ENCODE measurements at regions of chr2 and their contacts with region 1.

Region 1: DNA sequence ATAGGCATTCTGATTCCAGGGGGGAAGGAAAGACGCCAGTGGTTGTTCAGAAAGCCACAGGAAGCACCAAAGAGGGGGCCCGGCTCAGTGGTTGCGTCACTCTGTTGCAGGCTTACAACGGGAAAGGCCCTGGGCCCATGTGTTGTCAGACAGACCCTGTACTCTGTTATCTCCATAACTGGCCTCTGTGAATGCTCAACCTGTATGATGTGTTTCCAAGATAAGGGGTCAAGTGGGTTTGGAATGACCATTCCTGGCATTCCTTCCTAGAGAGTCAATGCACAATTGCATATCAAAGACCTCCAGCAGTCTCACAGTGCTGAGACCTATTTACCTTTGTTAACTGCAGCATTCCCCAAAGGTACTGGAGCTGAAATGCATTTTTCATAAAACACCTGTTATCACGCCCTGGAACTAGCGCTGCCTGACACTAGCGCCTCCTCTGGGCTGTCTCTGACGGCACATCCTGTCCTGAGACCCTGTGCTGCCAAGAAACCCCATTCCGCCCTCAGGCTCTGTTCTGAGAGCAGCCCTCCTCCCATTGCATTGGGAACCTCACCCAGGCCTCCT is 13.2 kb upstream of the LRRFIP1 start:
- DNase-seq: peak; percentile 87 to 91
- H3K4me3 ChIP-seq: no peak overlapping the region
- H3K4me3 Mint-ChIP-seq: peak overlapping the region; percentile 54
- H3K27ac Mint-ChIP-seq: peak overlapping the region; percentile 88
- H3K4me1 ChIP-seq: peaks cover 34% of the 10 kb centered on the region
- H3K4me1 Mint-ChIP-seq: peaks cover 42% of the 10 kb centered on the region
- H3K27me3 ChIP-seq: no peaks in the 10 kb centered on the region
- H3K27me3 Mint-ChIP-seq: no peaks in the 10 kb centered on the region
- CTCF ChIP-seq: peak; percentile 30 to 59

Region 2: GRCh38 chr2:237393523-237393922 is 220.7 kb before region 1 on chr2:
- CTCF ChIA-PET with region 1: no interaction called
- POLR2A ChIA-PET with region 1: no interaction called
- intact Hi-C with region 1: no loop called
- DNase-seq: no peak
- H3K4me3 ChIP-seq: no peak overlapping the region
- H3K4me3 Mint-ChIP-seq: no peak overlapping the region
- H3K27ac Mint-ChIP-seq: no peak overlapping the region
- H3K4me1 ChIP-seq: no peaks in the 10 kb centered on the region
- H3K4me1 Mint-ChIP-seq: no peaks in the 10 kb centered on the region
- H3K27me3 ChIP-seq: no peaks in the 10 kb centered on the region
- H3K27me3 Mint-ChIP-seq: peaks cover 22% of the 10 kb centered on the region
- CTCF ChIP-seq: no peak

Region 3: DNA sequence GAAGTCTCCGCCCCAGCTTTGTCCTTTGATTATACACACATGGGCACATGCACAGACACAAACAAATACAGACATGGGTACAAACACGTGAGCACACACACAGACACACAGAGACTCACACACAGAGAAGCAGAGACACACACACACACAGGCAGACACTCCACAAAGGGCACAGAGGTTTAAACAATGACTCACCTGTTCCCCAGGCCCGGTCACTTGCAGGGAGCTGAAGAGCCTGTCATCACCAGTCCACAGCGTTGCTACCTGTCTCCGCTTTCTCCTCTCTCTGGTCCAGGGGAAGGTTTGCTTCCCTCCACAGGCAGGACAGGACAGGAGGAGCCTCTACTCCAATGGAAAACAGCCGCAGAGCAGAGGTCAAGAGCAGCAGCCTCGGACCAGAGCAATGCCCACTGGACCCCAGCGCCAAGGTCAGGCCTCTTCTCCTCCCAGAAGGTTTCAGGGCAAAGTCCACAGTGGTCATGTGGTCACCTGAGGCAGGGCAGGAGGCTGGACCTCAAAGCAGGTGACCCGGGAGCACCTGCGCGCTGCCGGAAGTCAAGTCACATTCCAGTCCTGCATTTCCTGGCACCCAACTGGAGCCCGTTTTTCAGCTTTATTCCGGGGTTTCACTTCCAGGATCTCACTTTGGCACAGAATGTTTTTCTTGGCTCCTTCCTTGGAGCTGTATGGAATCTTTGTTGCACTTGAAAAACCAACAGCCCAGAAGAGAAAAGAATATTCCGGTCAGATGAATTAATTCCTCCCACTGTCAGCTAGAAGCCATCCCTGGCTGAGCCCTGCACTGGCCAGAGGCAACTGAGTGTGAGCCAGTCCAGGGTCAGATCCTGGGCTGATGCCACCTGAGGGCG is 23.7 kb before region 1 on chr2 and contains the start of gene RAB17:
- CTCF ChIA-PET with region 1: interaction called, 3 read pairs
- POLR2A ChIA-PET with region 1: no interaction called
- intact Hi-C with region 1: loop called (anchors 1 kb)
- DNase-seq: peak; percentile 87 to 91
- H3K4me3 ChIP-seq: peak within 1 kb of the TSS; percentile 36
- H3K4me3 Mint-ChIP-seq: peak within 1 kb of the TSS; percentile 88
- H3K27ac Mint-ChIP-seq: peak within 1 kb of the TSS; percentile 95
- H3K4me1 ChIP-seq: peaks cover 33% of the 10 kb centered on the region
- H3K4me1 Mint-ChIP-seq: peaks cover 18% of the 10 kb centered on the region
- H3K27me3 ChIP-seq: no peaks in the 10 kb centered on the region
- H3K27me3 Mint-ChIP-seq: no peaks in the 10 kb centered on the region
- CTCF ChIP-seq: no peak
- total RNA-seq, gene RAB17: 60.9 and 61.5 TPM in 2 replicates

Region 4: DNA sequence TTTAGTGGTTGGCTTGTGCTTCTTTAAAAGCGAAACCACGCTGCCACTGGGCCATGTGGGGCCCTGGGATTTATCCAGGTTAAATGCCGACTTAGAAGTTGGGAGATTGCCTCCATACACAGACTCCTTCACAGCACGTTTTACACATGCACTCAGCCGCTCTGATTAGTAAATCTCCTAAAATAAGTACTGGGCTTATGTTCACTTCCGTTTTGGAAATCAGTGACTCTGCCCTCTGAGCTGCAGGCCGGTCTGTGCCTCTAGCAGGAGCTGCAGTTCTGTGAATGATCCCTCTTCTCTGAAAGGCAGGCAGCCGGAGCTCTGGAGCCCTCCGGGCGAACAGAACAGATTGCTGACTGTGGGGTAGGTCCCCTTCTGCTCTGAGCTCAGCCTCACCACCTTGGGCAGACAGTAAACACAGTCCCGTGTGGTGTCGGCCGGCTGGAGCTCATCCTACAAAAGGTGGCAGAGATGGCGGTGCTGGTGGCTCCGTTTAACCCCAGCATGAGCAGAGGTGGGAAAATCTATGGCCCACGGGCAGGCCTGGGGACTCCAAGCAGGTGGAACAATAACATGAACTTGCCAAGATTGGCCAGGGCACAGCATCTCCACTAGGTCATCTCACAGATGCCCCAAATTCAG is 13.9 kb before region 1 on chr2:
- CTCF ChIA-PET with region 1: interaction called, 4 read pairs
- POLR2A ChIA-PET with region 1: no interaction called
- intact Hi-C with region 1: loop called (anchors 1 kb)
- DNase-seq: no peak
- H3K4me3 ChIP-seq: no peak overlapping the region
- H3K4me3 Mint-ChIP-seq: no peak overlapping the region
- H3K27ac Mint-ChIP-seq: no peak overlapping the region
- H3K4me1 ChIP-seq: peaks cover 53% of the 10 kb centered on the region
- H3K4me1 Mint-ChIP-seq: peaks cover 30% of the 10 kb centered on the region
- H3K27me3 ChIP-seq: no peaks in the 10 kb centered on the region
- H3K27me3 Mint-ChIP-seq: no peaks in the 10 kb centered on the region
- CTCF ChIP-seq: no peak

Region 5: DNA sequence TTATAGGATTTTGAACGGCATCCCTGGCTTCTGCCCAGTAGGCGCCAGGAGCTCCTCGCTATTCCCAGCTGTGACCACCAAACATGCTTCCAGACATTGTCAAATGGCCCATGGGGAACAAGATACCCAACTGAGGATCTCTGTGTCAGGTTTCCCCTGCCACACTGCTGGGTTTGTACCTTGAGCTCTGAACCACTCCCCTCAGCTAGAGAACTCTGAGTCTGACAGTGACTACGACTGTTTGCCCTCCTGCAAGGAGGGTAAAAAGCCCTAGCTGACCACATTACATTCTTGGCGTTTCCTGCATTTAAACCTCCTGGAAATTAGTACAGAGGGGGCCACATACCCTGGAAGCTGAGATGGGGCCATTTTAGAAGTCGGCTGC is 25.6 kb after region 1 on chr2:
- CTCF ChIA-PET with region 1: no interaction called
- POLR2A ChIA-PET with region 1: no interaction called
- intact Hi-C with region 1: no loop called
- DNase-seq: no peak
- H3K4me3 ChIP-seq: no peak overlapping the region
- H3K4me3 Mint-ChIP-seq: no peak overlapping the region
- H3K27ac Mint-ChIP-seq: no peak overlapping the region
- H3K4me1 ChIP-seq: 0 out of 2 replicates have a peak, but pooled peaks cover under 1% of the 10 kb centered on the region
- H3K4me1 Mint-ChIP-seq: no peaks in the 10 kb centered on the region
- H3K27me3 ChIP-seq: no peaks in the 10 kb centered on the region
- H3K27me3 Mint-ChIP-seq: no peaks in the 10 kb centered on the region
- CTCF ChIP-seq: no peak

Region 6: GRCh38 chr2:237662671-237663093 is 48.4 kb after region 1 on chr2:
- CTCF ChIA-PET with region 1: no interaction called
- POLR2A ChIA-PET with region 1: no interaction called
- intact Hi-C with region 1: loop called (anchors 5 kb)
- DNase-seq: peak; percentile 53 to 62
- H3K4me3 ChIP-seq: no peak overlapping the region
- H3K4me3 Mint-ChIP-seq: no peak overlapping the region
- H3K27ac Mint-ChIP-seq: no peak overlapping the region
- H3K4me1 ChIP-seq: 0 out of 2 replicates have a peak, but pooled peaks cover 7% of the 10 kb centered on the region
- H3K4me1 Mint-ChIP-seq: peaks cover 7% of the 10 kb centered on the region
- H3K27me3 ChIP-seq: no peaks in the 10 kb centered on the region
- H3K27me3 Mint-ChIP-seq: no peaks in the 10 kb centered on the region
- CTCF ChIP-seq: no peak

Region 7: GRCh38 chr2:237691908-237692600 is 77.8 kb after region 1 on chr2:
- CTCF ChIA-PET with region 1: no interaction called
- POLR2A ChIA-PET with region 1: no interaction called
- intact Hi-C with region 1: loop called (anchors 1 kb)
- DNase-seq: peak; percentile 87 to 90
- H3K4me3 ChIP-seq: peak overlapping the region; percentile 81
- H3K4me3 Mint-ChIP-seq: peak overlapping the region; percentile 72
- H3K27ac Mint-ChIP-seq: peak overlapping the region; percentile 45
- H3K4me1 ChIP-seq: peaks cover 19% of the 10 kb centered on the region; the same call in 1 of the 2 replicates
- H3K4me1 Mint-ChIP-seq: peaks cover 19% of the 10 kb centered on the region
- H3K27me3 ChIP-seq: no peaks in the 10 kb centered on the region
- H3K27me3 Mint-ChIP-seq: no peaks in the 10 kb centered on the region
- CTCF ChIP-seq: no peak

Region 8: DNA sequence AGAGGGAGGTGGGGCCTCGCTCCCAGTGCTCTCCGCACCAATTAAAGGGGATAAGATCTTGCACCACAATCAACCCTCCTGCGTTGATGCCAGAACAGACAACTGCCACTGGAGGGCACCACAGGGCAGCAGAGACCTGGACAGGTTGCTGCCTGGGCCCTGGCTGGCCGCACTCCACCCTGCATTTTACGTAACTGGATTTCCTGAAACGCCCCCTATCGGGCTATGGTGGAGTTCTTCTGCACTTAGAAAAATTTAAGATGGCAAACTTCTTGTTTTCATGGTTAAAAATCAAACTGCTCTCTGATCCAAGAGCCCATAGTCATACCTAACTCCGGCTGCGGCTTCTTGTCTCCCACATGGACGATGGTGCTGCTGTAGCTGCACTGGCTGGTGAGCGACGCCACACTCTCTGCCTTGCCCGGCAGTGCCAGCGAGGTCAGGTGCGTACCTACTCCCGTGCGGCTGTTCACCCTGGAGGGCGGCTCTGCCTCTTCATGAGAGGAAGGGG is 642.4 kb after region 1 on chr2:
- CTCF ChIA-PET with region 1: no interaction called
- POLR2A ChIA-PET with region 1: no interaction called
- intact Hi-C with region 1: no loop called
- DNase-seq: peak; percentile 86
- H3K4me3 ChIP-seq: no peak overlapping the region
- H3K4me3 Mint-ChIP-seq: no peak overlapping the region
- H3K27ac Mint-ChIP-seq: no peak overlapping the region
- H3K4me1 ChIP-seq: no peaks in the 10 kb centered on the region
- H3K4me1 Mint-ChIP-seq: no peaks in the 10 kb centered on the region
- H3K27me3 ChIP-seq: no peaks in the 10 kb centered on the region
- H3K27me3 Mint-ChIP-seq: no peaks in the 10 kb centered on the region
- CTCF ChIP-seq: peak; percentile 85

Measured in Caco-2 (cell line).